ENCODE measurements at regions of chr17 and their contacts with region 1.

Region 1: DNA sequence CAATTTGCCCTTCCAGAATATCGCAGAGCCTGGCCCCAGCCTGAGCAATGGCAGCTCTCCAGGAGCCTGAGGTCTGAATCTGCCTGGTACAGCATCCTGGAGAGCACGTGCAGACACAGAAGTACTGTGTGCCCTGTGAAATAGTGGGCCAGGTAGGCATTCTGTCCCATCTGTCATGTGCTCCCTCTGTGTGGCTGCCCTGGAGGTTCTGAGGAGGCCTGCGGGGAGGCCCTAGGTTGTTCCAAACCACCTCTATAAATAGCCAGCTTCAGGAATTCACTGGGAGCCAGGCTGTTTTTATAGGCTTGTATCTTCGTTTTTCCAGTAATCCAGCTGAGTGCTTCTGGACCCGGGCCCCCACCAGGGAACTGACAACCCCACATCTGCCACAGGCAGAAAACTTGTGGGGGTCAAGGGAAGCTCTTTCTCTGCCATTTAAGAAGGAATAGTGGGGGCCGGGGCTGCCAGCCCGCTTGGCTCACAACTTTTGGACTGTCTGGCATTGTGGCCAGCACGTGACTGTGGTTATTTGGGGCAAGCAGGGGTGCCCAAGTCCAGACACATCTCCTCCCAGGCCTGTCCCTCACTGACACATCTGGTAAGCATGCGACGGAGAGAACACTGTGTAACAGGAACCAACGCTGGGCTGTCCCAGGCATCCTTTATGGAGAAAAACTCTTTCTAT is 356.3 kb upstream of the TNRC6C start:
- DNase-seq: peak; percentile 89 to 96
- H3K4me3 ChIP-seq: peak overlapping the region; percentile 20 to 40
- H3K27ac ChIP-seq: peak overlapping the region; percentile 91 to 96
- H3K4me1 ChIP-seq: peaks cover 4 to 78% (median 61%) of the 10 kb centered on the region in 4 donors
- H3K27me3 ChIP-seq: no peaks in the 10 kb centered on the region
- CTCF ChIP-seq: peak in 1 of 2 experiments; percentile 15

Region 2: GRCh38 chr17:77681861-77682260 is 79.7 kb after region 1 on chr17:
- intact Hi-C with region 1: no loop called
- DNase-seq: peak in 1 of 2 donors; percentile 63
- H3K4me3 ChIP-seq: no peak overlapping the region
- H3K27ac ChIP-seq: no peak overlapping the region
- H3K4me1 ChIP-seq: peaks cover 0 to 15% (median 4%) of the 10 kb centered on the region in 4 donors
- H3K27me3 ChIP-seq: peaks cover 0 to 16% of the 10 kb centered on the region in 2 donors
- CTCF ChIP-seq: no peak

Region 3: GRCh38 chr17:77692571-77693161 is 90.5 kb after region 1 on chr17:
- intact Hi-C with region 1: no loop called
- DNase-seq: peak in 1 of 2 donors; percentile 66
- H3K4me3 ChIP-seq: no peak overlapping the region
- H3K27ac ChIP-seq: no peak overlapping the region
- H3K4me1 ChIP-seq: peaks cover 0 to 21% (median 9%) of the 10 kb centered on the region in 4 donors
- H3K27me3 ChIP-seq: peaks cover 0 to 7% of the 10 kb centered on the region in 2 donors
- CTCF ChIP-seq: no peak

Region 4: GRCh38 chr17:77957857-77958715 is 355.9 kb after region 1 on chr17 and contains the start of gene TNRC6C:
- intact Hi-C with region 1: loop called (anchors 5 kb)
- DNase-seq: peak; percentile 100
- H3K4me3 ChIP-seq: peak within 1 kb of the TSS; percentile 66 to 71
- H3K27ac ChIP-seq: peak within 1 kb of the TSS; percentile 85 to 89
- H3K4me1 ChIP-seq: peaks cover 0 to 38% (median 15%) of the 10 kb centered on the region in 4 donors
- H3K27me3 ChIP-seq: no peaks in the 10 kb centered on the region
- CTCF ChIP-seq: peak in 1 of 2 experiments; percentile 31